Natural killer cell (primary cell): ENCODE measurements at regions of chr11 and their contacts with region 1.

Region 1: GRCh38 chr11:19561011-19561410 is 151.6 kb upstream of the NAV2 start:
- DNase-seq: no peak
- ATAC-seq: no peak
- H3K4me3 ChIP-seq: no peak overlapping the region
- H3K4me3 Mint-ChIP-seq: no peak overlapping the region
- H3K27ac ChIP-seq: no peak overlapping the region
- H3K27ac Mint-ChIP-seq: no peak overlapping the region
- H3K4me1 ChIP-seq: peaks cover 5% of the 10 kb centered on the region
- H3K4me1 Mint-ChIP-seq: no peaks in the 10 kb centered on the region
- H3K27me3 ChIP-seq: no peaks in the 10 kb centered on the region
- H3K27me3 Mint-ChIP-seq: peaks cover 13 to 40% of the 10 kb centered on the region in 2 donors
- CTCF ChIP-seq: no peak

Region 2: GRCh38 chr11:19394525-19395016 is 166.4 kb before region 1 on chr11:
- intact Hi-C with region 1: no loop called
- DNase-seq: no peak
- ATAC-seq: no peak
- H3K4me3 ChIP-seq: no peak overlapping the region
- H3K4me3 Mint-ChIP-seq: no peak overlapping the region
- H3K27ac ChIP-seq: no peak overlapping the region
- H3K27ac Mint-ChIP-seq: peak overlapping the region in 1 of 2 donors; percentile 21
- H3K4me1 ChIP-seq: no peaks in the 10 kb centered on the region
- H3K4me1 Mint-ChIP-seq: peaks cover 4 to 9% of the 10 kb centered on the region in 2 donors
- H3K27me3 ChIP-seq: no peaks in the 10 kb centered on the region
- H3K27me3 Mint-ChIP-seq: peaks cover 2 to 8% of the 10 kb centered on the region in 2 donors
- CTCF ChIP-seq: no peak

Region 3: GRCh38 chr11:19577976-19578619 is 17.1 kb after region 1 on chr11:
- intact Hi-C with region 1: no loop called
- DNase-seq: no peak
- ATAC-seq: no peak
- H3K4me3 ChIP-seq: no peak overlapping the region
- H3K4me3 Mint-ChIP-seq: no peak overlapping the region
- H3K27ac ChIP-seq: no peak overlapping the region
- H3K27ac Mint-ChIP-seq: no peak overlapping the region
- H3K4me1 ChIP-seq: no peaks in the 10 kb centered on the region
- H3K4me1 Mint-ChIP-seq: no peaks in the 10 kb centered on the region
- H3K27me3 ChIP-seq: no peaks in the 10 kb centered on the region
- H3K27me3 Mint-ChIP-seq: peaks cover 0 to 3% of the 10 kb centered on the region in 2 donors
- CTCF ChIP-seq: no peak

Region 4: GRCh38 chr11:19742588-19743292 is 181.7 kb after region 1 on chr11:
- intact Hi-C with region 1: loop called (anchors 1 kb)
- DNase-seq: peak; percentile 56 to 79
- ATAC-seq: peak; percentile 75 to 92 (median 91)
- H3K4me3 ChIP-seq: no peak overlapping the region
- H3K4me3 Mint-ChIP-seq: no peak overlapping the region
- H3K27ac ChIP-seq: no peak overlapping the region
- H3K27ac Mint-ChIP-seq: no peak overlapping the region
- H3K4me1 ChIP-seq: no peaks in the 10 kb centered on the region
- H3K4me1 Mint-ChIP-seq: no peaks in the 10 kb centered on the region
- H3K27me3 ChIP-seq: no peaks in the 10 kb centered on the region
- H3K27me3 Mint-ChIP-seq: peaks cover 0 to 2% of the 10 kb centered on the region in 2 donors
- CTCF ChIP-seq: peak; percentile 83

Region 5: GRCh38 chr11:19903620-19904069 is 342.6 kb after region 1 on chr11:
- intact Hi-C with region 1: loop called (anchors 2 kb)
- DNase-seq: peak in 1 of 2 donors; percentile 55
- ATAC-seq: no peak
- H3K4me3 ChIP-seq: no peak overlapping the region
- H3K4me3 Mint-ChIP-seq: no peak overlapping the region
- H3K27ac ChIP-seq: no peak overlapping the region
- H3K27ac Mint-ChIP-seq: no peak overlapping the region
- H3K4me1 ChIP-seq: no peaks in the 10 kb centered on the region
- H3K4me1 Mint-ChIP-seq: no peaks in the 10 kb centered on the region
- H3K27me3 ChIP-seq: no peaks in the 10 kb centered on the region
- H3K27me3 Mint-ChIP-seq: no peaks in the 10 kb centered on the region
- CTCF ChIP-seq: peak; percentile 24